Head of caudate nucleus (tissue), 42 donors: ENCODE measurements at regions of chr5 and their contacts with region 1.

Region 1: DNA sequence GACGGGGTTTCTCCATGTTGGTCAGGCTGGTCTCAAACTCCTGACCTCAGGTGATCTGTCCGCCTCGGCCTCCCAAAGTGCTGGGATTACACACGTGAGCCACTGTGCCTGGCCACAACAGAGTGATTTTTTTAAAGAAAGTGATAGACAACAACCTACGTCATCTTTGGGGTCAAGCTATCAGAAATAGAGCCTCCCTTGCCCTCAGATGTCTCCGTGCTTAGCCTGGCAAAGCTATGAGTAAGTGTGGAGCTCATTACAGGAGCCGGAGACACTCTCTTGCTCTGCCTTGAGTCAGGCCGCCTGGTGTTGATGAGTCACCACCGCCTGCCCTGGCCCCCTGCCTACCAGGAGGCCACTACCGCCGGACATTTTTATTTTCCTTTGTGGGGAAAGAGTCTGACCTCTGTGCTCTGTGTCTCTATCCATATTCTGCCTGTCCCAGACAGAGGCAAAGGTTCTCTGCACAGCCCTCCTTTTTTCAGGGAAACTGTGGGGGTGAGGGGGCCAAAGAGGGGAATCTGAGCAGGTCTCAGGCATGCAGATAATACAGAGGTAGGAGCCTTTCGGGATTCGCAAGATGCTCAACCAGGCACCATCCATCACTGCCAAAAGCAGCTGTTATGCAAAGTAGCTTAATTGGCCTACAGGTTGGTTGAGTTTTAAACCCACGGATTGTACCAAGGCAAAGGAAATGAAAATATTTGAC is 123.7 kb upstream of the CPEB4 start:
- DNase-seq: peak in 29 of 42 donors; percentile 27 to 90 (median 53)

Region 2: GRCh38 chr5:173679909-173680630 is 84.4 kb before region 1 on chr5:
- intact Hi-C with region 1: loop called (anchors 10 kb)
- DNase-seq: no peak